ENCODE measurements at regions of chr2 and their contacts with region 1.

Region 1: GRCh38 chr2:190679813-190680591 is 31.1 kb downstream of the NAB1 start:
- DNase-seq: peak; percentile 95
- H3K4me3 Mint-ChIP-seq: peak overlapping the region; percentile 12
- H3K27ac Mint-ChIP-seq: peak overlapping the region; percentile 50
- H3K4me1 Mint-ChIP-seq: peaks cover 18% of the 10 kb centered on the region
- H3K27me3 Mint-ChIP-seq: no peaks in the 10 kb centered on the region
- CTCF ChIP-seq: peak; percentile 86

Region 2: DNA sequence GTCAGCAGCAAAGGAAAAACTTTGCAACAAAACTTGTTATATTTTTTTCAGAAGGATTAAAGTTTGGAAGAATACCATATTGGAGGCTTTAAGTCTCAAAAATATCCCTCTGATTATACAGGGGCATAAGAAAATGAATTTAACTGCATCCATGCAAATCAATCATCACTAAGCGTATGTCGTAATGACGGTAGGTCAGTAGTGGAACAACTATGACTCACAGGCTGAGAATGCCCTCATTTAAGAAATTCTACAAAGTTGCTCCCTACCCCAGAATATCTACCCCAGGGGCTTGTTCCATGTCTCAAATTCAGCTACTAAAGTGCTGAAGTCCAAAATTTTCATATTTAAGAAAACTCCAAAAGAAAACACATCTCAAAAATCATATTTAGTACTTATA is 43.6 kb before region 1 on chr2:
- CTCF ChIA-PET with region 1: interaction called, 3 read pairs
- POLR2A ChIA-PET with region 1: interaction called, 5 read pairs
- intact Hi-C with region 1: loop called (anchors 1 kb)
- DNase-seq: peak; percentile 83
- H3K4me3 Mint-ChIP-seq: no peak overlapping the region
- H3K27ac Mint-ChIP-seq: peak overlapping the region; percentile 80
- H3K4me1 Mint-ChIP-seq: peaks cover 50% of the 10 kb centered on the region
- H3K27me3 Mint-ChIP-seq: no peaks in the 10 kb centered on the region
- CTCF ChIP-seq: no peak

Region 3: GRCh38 chr2:190664240-190664639 is 15.8 kb before region 1 on chr2:
- CTCF ChIA-PET with region 1: interaction called, 18 read pairs
- POLR2A ChIA-PET with region 1: interaction called, 18 read pairs
- intact Hi-C with region 1: no loop called
- DNase-seq: no peak
- H3K4me3 Mint-ChIP-seq: no peak overlapping the region
- H3K27ac Mint-ChIP-seq: peak overlapping the region; percentile 80
- H3K4me1 Mint-ChIP-seq: peaks cover 52% of the 10 kb centered on the region
- H3K27me3 Mint-ChIP-seq: no peaks in the 10 kb centered on the region
- CTCF ChIP-seq: no peak

Measured in MCF 10A (cell line).